ENCODE measurements at regions of chr7 and their contacts with region 1.

Region 1: GRCh38 chr7:110522761-110523244 is 568.1 kb upstream of the LRRN3 start:
- DNase-seq: peak; percentile 96
- ATAC-seq: peak; percentile 99
- H3K4me3 ChIP-seq: peak overlapping the region in 2 of 3 experiments; percentile 2 to 3; a peak in 2 of 6 replicates
- H3K27ac ChIP-seq: peak overlapping the region; percentile 84
- H3K4me1 ChIP-seq: peaks cover 36% of the 10 kb centered on the region
- H3K27me3 ChIP-seq: no peaks in the 10 kb centered on the region
- CTCF ChIP-seq: no peak
- EP300 ChIP-seq: peak; percentile 71 to 93
- POLR2A ChIP-seq: no peak
- RAD21 ChIP-seq: no peak

Region 2: DNA sequence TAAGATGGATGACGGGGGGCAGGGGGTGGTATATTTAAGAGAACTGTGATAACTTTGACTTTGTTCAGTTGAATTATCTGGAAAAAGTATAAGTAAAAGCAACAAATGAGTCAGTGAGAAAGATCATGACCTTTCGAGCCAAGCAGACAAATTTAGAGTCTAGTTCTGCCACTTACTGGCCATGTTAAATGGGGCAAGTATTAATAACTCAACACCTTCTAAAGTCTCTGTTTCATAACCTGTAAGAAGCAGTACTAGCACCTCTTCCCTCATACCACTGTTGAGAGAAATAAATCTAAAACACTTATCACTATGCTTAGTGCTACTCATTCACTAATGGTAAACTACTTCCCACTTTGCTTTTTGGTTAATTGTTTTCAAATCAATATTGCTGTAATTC is 36.3 kb before region 1 on chr7:
- CTCF ChIA-PET with region 1: no interaction called
- POLR2A ChIA-PET with region 1: no interaction called
- in situ Hi-C with region 1: no loop called
- intact Hi-C with region 1: no loop called
- DNase-seq: no peak
- ATAC-seq: no peak
- H3K4me3 ChIP-seq: no peak overlapping the region
- H3K27ac ChIP-seq: no peak overlapping the region
- H3K4me1 ChIP-seq: no peaks in the 10 kb centered on the region
- H3K27me3 ChIP-seq: no peaks in the 10 kb centered on the region
- CTCF ChIP-seq: no peak
- EP300 ChIP-seq: no peak
- POLR2A ChIP-seq: no peak
- RAD21 ChIP-seq: no peak

Region 3: DNA sequence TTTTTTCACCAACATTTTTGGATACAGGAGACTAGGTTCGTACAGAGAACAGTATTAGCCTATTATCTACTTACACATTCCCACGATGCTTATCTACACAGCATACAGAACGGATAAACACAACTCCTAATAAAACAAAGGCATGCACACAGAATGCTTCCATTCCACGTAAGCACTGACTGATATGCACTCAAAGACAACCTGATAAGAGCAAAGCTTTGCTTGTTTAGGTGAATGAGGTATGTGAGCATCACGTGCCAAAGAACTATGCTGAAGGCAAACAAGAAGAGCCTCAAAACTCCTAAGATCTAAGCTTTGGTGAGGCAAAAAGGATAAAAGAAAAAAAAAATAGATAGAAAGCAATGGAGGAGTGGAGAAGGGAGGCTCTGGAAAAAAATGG is 154.6 kb after region 1 on chr7:
- CTCF ChIA-PET with region 1: no interaction called
- POLR2A ChIA-PET with region 1: no interaction called
- in situ Hi-C with region 1: no loop called
- intact Hi-C with region 1: loop called (anchors 1 kb)
- DNase-seq: peak; percentile 93
- ATAC-seq: peak; percentile 95
- H3K4me3 ChIP-seq: no peak overlapping the region
- H3K27ac ChIP-seq: peak overlapping the region; percentile 15
- H3K4me1 ChIP-seq: peaks cover 28% of the 10 kb centered on the region
- H3K27me3 ChIP-seq: no peaks in the 10 kb centered on the region
- CTCF ChIP-seq: no peak
- EP300 ChIP-seq: peak in 1 of 2 experiments; percentile 74; a peak in 2 of 4 replicates
- POLR2A ChIP-seq: no peak
- RAD21 ChIP-seq: no peak